ENCODE measurements at regions of chr17 and their contacts with region 1.

Region 1: GRCh38 chr17:29433541-29433940 is 43.4 kb downstream of the TAOK1 start:
- DNase-seq: no peak
- ATAC-seq: peak; percentile 28
- H3K4me3 Mint-ChIP-seq: no peak overlapping the region
- H3K27ac Mint-ChIP-seq: peak overlapping the region; percentile 66
- H3K4me1 Mint-ChIP-seq: peaks cover 24% of the 10 kb centered on the region
- H3K27me3 Mint-ChIP-seq: no peaks in the 10 kb centered on the region
- CTCF ChIP-seq: no peak

Region 2: GRCh38 chr17:29379084-29379991 is 54.2 kb before region 1 on chr17:
- CTCF ChIA-PET with region 1: no interaction called
- POLR2A ChIA-PET with region 1: no interaction called
- intact Hi-C with region 1: no loop called
- DNase-seq: no peak
- ATAC-seq: no peak
- H3K4me3 Mint-ChIP-seq: no peak overlapping the region
- H3K27ac Mint-ChIP-seq: no peak overlapping the region
- H3K4me1 Mint-ChIP-seq: no peaks in the 10 kb centered on the region
- H3K27me3 Mint-ChIP-seq: peaks cover 2% of the 10 kb centered on the region
- CTCF ChIP-seq: no peak

Region 3: DNA sequence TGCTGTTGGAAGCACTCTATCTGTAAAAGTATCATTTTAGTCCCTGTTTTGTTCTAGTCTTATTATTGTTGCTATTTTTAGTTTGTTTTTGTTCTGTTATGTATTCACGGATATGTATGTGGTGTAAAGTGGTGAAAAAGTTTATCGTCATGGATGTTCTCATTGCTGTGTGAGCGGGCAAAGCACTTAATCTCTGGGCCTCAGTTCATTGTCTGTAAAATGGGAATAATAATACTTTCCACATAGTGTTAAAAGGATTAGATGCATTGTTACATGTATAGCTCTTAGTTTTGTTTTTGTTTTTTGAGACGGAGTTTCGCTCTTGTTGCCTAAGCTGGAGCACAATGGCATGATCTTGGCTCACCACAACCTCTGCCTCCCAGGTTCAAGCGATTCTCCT is 23.6 kb before region 1 on chr17:
- CTCF ChIA-PET with region 1: no interaction called
- POLR2A ChIA-PET with region 1: no interaction called
- intact Hi-C with region 1: no loop called
- DNase-seq: no peak
- ATAC-seq: no peak
- H3K4me3 Mint-ChIP-seq: no peak overlapping the region
- H3K27ac Mint-ChIP-seq: peak overlapping the region; percentile 10
- H3K4me1 Mint-ChIP-seq: peaks cover 24% of the 10 kb centered on the region
- H3K27me3 Mint-ChIP-seq: no peaks in the 10 kb centered on the region
- CTCF ChIP-seq: no peak

Region 4: DNA sequence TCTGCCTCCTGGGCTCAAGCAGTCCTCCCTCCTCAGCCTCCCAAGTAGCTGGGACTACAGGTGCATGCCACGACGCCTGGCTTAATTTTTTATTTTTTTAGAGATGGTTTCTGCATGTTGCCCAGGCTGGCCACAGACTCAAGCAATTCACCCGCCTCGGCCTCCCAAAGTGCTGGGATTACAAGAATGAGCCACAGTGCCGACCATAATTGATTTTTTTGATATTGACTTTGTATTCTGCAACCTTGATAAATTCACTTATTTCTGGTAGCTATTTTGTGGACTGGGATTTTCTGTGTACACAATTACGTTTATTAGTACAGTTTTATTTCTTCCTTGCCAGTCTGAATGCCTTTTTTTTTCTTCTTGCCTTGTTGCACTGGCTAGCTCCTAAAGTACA is 13.4 kb before region 1 on chr17:
- CTCF ChIA-PET with region 1: no interaction called
- POLR2A ChIA-PET with region 1: no interaction called
- intact Hi-C with region 1: no loop called
- DNase-seq: no peak
- ATAC-seq: no peak
- H3K4me3 Mint-ChIP-seq: no peak overlapping the region
- H3K27ac Mint-ChIP-seq: no peak overlapping the region
- H3K4me1 Mint-ChIP-seq: no peaks in the 10 kb centered on the region
- H3K27me3 Mint-ChIP-seq: no peaks in the 10 kb centered on the region
- CTCF ChIP-seq: no peak

Region 5: GRCh38 chr17:29444589-29444988 is 11.0 kb after region 1 on chr17:
- CTCF ChIA-PET with region 1: no interaction called
- POLR2A ChIA-PET with region 1: interaction called, 11 read pairs
- intact Hi-C with region 1: no loop called
- DNase-seq: no peak
- ATAC-seq: no peak
- H3K4me3 Mint-ChIP-seq: no peak overlapping the region
- H3K27ac Mint-ChIP-seq: no peak overlapping the region
- H3K4me1 Mint-ChIP-seq: peaks cover 45% of the 10 kb centered on the region
- H3K27me3 Mint-ChIP-seq: no peaks in the 10 kb centered on the region
- CTCF ChIP-seq: no peak

Region 6: DNA sequence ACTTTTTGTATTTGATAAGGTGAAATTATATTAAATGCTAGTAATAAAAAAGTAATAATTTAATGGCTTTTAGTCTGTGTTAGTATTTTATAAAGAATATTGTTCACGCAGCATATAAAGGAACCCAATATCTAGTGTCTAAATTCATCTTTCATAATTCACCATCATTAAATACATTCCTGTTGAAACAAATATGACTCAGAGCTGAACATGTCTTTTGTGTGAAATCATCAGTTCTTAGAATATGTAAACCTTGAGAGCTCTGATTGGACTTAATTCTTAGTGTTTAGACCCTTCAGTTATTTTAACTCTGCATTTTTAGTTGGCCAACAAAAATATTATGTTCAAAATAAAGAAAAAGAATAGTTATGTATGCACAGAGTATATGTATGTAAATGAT is 61.5 kb after region 1 on chr17:
- CTCF ChIA-PET with region 1: no interaction called
- POLR2A ChIA-PET with region 1: no interaction called
- intact Hi-C with region 1: no loop called
- DNase-seq: no peak
- ATAC-seq: no peak
- H3K4me3 Mint-ChIP-seq: no peak overlapping the region
- H3K27ac Mint-ChIP-seq: no peak overlapping the region
- H3K4me1 Mint-ChIP-seq: no peaks in the 10 kb centered on the region
- H3K27me3 Mint-ChIP-seq: no peaks in the 10 kb centered on the region
- CTCF ChIP-seq: no peak

Measured in activated B cell treated with CpG ODN at 0.5 μM for 24 hours (primary cell).